ENCODE measurements at regions of chr15 and their contacts with region 1.

Region 1: GRCh38 chr15:95009635-95010034 is 778.3 kb downstream of the MCTP2 start:
- DNase-seq: no peak
- ATAC-seq: no peak
- H3K4me3 Mint-ChIP-seq: no peak overlapping the region
- H3K27ac Mint-ChIP-seq: no peak overlapping the region
- H3K4me1 Mint-ChIP-seq: no peaks in the 10 kb centered on the region
- H3K27me3 Mint-ChIP-seq: no peaks in the 10 kb centered on the region
- CTCF ChIP-seq: no peak

Region 2: GRCh38 chr15:94943888-94944287 is 65.7 kb before region 1 on chr15:
- CTCF ChIA-PET with region 1: no interaction called
- POLR2A ChIA-PET with region 1: no interaction called
- intact Hi-C with region 1: loop called (anchors 10 kb)
- DNase-seq: no peak
- ATAC-seq: no peak
- H3K4me3 Mint-ChIP-seq: no peak overlapping the region
- H3K27ac Mint-ChIP-seq: no peak overlapping the region
- H3K4me1 Mint-ChIP-seq: no peaks in the 10 kb centered on the region
- H3K27me3 Mint-ChIP-seq: no peaks in the 10 kb centered on the region
- CTCF ChIP-seq: no peak

Region 3: DNA sequence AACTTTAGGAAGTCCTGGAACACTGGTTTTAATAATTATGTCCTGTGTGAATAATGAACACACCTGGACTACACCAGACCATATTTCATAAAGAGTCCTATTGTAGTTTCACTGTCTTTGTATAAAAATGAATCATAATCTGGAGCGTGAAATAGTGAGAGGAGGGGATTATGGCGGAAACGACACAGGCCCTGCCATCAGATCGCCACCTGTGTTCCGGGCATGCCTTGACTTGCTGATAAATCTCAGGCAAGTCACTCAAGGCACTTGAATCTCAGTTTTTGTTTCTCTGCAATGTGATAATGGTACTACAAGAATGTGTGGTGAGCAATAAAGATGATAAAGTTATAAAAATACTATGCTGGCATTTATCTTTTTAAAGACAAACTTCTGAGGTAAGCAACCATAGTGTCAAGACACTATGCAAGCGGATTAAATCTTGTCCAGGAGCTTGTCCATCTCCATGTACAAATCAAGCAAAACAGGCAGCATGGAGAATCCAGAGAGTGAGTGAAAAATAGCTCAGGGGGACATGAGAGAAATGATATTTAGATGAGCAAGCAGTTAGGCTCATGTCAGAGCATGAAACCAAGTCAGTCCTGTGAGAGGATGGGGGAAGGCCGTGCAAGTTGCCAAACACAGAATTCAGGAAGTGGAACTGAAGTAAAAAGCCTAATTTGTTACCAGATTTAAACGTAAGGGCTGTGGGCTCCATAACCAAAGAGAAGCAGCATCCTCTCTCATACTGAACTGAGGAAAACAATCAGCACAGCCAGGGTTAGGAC is 217.4 kb after region 1 on chr15:
- CTCF ChIA-PET with region 1: no interaction called
- POLR2A ChIA-PET with region 1: no interaction called
- intact Hi-C with region 1: no loop called
- DNase-seq: no peak
- ATAC-seq: no peak
- H3K4me3 Mint-ChIP-seq: no peak overlapping the region
- H3K27ac Mint-ChIP-seq: no peak overlapping the region
- H3K4me1 Mint-ChIP-seq: no peaks in the 10 kb centered on the region
- H3K27me3 Mint-ChIP-seq: no peaks in the 10 kb centered on the region
- CTCF ChIP-seq: no peak

Measured in activated B cell treated with CpG ODN at 0.5 μM for 24 hours (primary cell).